ENCODE measurements at regions of chr1 and their contacts with region 1.

Region 1: GRCh38 chr1:58546520-58547308 is at the start of gene OMA1:
- DNase-seq: peak; percentile 99
- H3K4me3 ChIP-seq: peak within 1 kb of the TSS; percentile 72 to 86 (median 76)
- H3K27ac ChIP-seq: peak within 1 kb of the TSS; percentile 98 to 100 (median 99)
- H3K4me1 ChIP-seq: peaks cover 12 to 20% (median 14%) of the 10 kb centered on the region in 4 donors
- H3K27me3 ChIP-seq: peaks cover 0 to 2% (median 0%) of the 10 kb centered on the region in 4 donors
- CTCF ChIP-seq: peak; percentile 98 to 99 (median 98)
- EP300 ChIP-seq: no peak
- POLR2A ChIP-seq: peak; percentile 45
- total RNA-seq, gene OMA1: 25.8 to 53.6 (median 32.9) TPM

Region 2: DNA sequence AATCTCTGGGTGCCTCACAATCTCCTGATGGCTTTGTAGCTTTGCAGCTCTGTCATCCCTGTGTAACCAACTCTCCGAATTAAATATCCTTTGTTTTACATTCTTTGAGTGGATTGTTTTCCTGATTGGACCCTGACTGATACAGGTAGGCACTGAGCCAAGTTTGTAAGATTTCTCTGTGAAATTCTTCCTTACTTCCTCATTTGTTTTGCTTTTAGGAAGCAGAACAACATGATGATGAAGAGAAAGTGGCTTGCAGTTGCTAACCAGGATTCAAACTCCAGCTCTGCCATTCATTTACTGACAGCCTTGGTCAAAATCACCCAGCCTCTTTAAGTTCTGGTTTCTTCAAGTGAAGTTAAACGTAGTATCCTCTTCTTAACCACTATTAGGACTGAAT is 452.5 kb before region 1 on chr1:
- intact Hi-C with region 1: no loop called
- DNase-seq: no peak
- H3K4me3 ChIP-seq: no peak overlapping the region
- H3K27ac ChIP-seq: no peak overlapping the region
- H3K4me1 ChIP-seq: no peaks in the 10 kb centered on the region
- H3K27me3 ChIP-seq: no peaks in the 10 kb centered on the region
- CTCF ChIP-seq: no peak
- EP300 ChIP-seq: no peak
- POLR2A ChIP-seq: no peak

Region 3: DNA sequence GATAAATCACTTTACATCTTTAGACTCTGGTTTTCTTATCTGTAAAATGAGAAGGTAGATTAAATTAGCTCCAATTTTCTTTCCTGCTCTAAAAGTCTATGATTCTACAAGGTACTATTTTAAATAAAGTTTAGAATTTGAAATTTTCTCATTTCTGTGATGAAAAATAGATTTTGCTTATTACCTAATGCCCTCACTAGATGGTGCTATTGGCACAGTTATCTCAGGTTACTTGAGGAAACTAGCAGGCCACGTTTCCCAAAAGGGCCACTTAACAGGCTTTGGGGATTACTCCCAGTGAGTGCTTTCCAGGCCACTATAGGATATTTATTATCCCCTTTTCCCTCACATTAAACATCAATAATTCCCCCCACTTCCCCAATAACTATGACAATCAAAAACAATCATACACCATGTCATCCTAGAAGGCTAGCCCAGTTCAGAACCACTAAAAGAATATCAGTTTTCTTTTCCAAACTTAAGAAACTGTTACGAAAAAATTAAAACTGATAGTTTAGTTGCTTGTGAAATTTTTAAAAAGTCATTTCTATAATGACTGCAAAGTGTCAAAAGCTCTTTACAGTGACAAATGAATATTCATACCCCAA is 30.8 kb before region 1 on chr1:
- intact Hi-C with region 1: loop called (anchors 1 kb)
- DNase-seq: no peak
- H3K4me3 ChIP-seq: no peak overlapping the region
- H3K27ac ChIP-seq: peak overlapping the region in 1 of 4 donors; percentile 15
- H3K4me1 ChIP-seq: peaks cover 0 to 10% (median 2%) of the 10 kb centered on the region in 4 donors
- H3K27me3 ChIP-seq: no peaks in the 10 kb centered on the region
- CTCF ChIP-seq: peak; percentile 66 to 80 (median 68)
- EP300 ChIP-seq: no peak
- POLR2A ChIP-seq: no peak

Region 4: GRCh38 chr1:58584082-58584895 is 37.6 kb after region 1 on chr1:
- intact Hi-C with region 1: loop called (anchors 5 kb)
- DNase-seq: no peak
- H3K4me3 ChIP-seq: no peak overlapping the region
- H3K27ac ChIP-seq: peak overlapping the region; percentile 58 to 76 (median 71)
- H3K4me1 ChIP-seq: peaks cover 0 to 49% (median 36%) of the 10 kb centered on the region in 4 donors
- H3K27me3 ChIP-seq: no peaks in the 10 kb centered on the region
- CTCF ChIP-seq: no peak
- EP300 ChIP-seq: no peak
- POLR2A ChIP-seq: no peak

Region 5: GRCh38 chr1:58652651-58653184 is 106.0 kb after region 1 on chr1:
- intact Hi-C with region 1: loop called (anchors 10 kb)
- DNase-seq: no peak
- H3K4me3 ChIP-seq: no peak overlapping the region
- H3K27ac ChIP-seq: no peak overlapping the region
- H3K4me1 ChIP-seq: peaks cover 0 to 16% (median 11%) of the 10 kb centered on the region in 4 donors
- H3K27me3 ChIP-seq: no peaks in the 10 kb centered on the region
- CTCF ChIP-seq: peak; percentile 80 to 85 (median 82)
- EP300 ChIP-seq: no peak
- POLR2A ChIP-seq: no peak

Region 6: DNA sequence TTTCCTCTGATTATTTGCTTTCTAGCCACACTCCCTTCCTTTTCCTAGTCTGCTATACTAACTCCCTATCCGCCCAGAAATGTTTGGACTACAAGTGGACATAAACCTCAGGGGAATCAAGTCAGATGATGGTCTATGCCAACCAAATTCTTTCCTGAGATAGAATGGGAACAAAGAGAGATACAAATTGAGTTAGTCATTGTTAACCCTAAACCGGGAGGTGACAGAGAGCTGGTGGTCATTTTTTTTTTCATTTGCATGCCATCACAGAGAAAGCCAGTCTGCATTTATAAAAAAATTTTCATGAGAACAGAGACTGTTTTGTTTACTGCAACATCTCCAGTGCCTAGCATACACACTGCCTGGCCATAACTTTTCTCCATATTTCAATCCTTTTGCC is 118.2 kb after region 1 on chr1:
- intact Hi-C with region 1: no loop called
- DNase-seq: no peak
- H3K4me3 ChIP-seq: no peak overlapping the region
- H3K27ac ChIP-seq: no peak overlapping the region
- H3K4me1 ChIP-seq: peaks cover 0 to 3% (median 2%) of the 10 kb centered on the region in 4 donors
- H3K27me3 ChIP-seq: no peaks in the 10 kb centered on the region
- CTCF ChIP-seq: no peak
- EP300 ChIP-seq: no peak
- POLR2A ChIP-seq: no peak